Posterior cingulate gyrus (tissue), 11 donors: ENCODE measurements at regions of chr6 and their contacts with region 1.

Region 1: GRCh38 chr6:155530219-155530834 is 74.7 kb upstream of the NOX3 start:
- DNase-seq: no peak

Region 2: GRCh38 chr6:154986787-154987235 is 543.5 kb before region 1 on chr6:
- intact Hi-C with region 1: no loop called
- DNase-seq: no peak

Region 3: DNA sequence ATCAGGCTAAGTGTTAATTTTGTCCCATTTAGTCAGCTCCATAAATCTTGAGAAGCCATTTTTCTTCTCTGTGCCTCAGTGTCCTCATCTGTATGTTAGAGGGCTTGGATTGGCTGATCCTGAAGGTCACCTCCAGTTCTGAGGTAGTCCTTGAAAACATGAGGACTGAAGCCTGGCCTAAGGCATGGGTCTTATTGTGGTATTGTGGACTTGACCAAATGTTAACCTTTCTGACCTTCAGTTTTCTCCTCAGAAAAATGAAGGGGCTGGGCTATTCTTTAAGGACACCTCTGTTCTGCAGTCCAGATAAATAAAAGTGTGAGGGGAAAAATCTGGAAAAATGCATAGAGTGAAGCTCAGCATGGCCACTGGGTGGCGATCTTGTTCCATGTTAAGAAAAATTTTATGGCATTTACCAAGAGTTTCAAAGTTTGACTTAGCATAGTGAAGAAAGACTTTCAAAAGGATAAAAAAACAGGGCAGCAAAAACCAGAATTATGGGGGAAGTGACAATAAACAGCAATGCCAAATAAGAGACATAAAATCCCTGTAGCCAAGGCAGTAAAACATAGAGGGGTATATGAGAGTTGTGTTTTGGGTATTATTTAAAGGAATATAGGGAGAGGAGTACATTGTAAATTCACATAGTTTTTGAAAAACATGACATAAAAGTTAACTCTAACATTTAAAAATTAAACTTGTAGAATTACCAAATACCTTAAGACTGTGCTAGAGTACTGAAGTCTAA is 202.8 kb before region 1 on chr6:
- intact Hi-C with region 1: loop called (anchors 2 kb)
- DNase-seq: peak in 7 of 10 donors; percentile 34 to 86 (median 50)

Region 4: DNA sequence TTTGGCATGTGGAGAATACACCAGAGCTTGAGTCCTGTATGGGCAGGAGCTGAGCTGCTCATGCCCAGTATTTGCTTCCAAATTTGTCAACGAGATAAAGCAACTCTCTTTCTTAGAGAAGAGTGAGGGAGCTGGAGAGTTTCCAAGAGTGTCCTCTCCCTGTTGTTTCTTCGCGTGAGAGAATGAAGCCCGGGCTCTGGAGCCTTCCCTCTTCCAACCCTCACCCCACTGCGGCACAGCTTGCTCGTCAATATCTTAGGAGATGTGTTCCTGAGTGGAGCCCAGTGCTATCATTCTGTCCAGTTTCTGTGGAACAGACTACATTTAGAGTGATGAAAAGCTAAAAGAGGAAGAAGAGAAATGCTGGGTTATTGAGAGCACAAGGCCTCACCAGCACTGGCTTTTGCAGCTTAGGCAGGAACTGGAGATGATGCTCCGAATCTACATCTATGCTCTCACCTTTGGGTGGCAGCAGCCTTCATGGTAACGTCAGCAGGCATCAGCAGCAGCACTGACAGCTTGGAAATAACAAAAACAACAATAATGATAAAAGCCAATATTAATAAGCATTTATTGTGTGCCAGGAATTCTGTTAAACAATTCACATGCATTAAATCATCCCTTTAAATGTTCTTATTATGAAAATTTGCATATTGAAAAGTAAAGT is 149.5 kb before region 1 on chr6:
- intact Hi-C with region 1: loop called (anchors 10 kb)
- DNase-seq: peak in 3 of 10 donors; percentile 8 to 55 (median 10)

Region 5: DNA sequence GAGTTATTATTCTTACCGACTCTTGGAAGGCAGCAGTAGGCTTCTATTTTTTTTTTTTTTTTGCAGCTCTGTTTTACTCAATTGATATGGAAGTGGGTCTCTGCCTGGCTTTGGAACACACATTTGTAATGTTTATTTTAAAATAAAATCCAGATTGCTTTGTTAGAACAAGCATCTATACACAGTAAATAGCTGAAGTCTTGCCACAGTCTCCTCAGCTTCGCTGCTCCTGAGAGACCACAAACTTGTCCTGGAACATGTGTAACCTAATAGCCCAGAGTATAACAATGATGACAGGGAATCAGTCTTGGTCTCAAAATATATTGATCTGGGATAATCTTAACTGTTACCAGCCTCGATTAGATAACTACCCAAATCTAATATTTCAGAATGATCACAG is 225.1 kb after region 1 on chr6:
- intact Hi-C with region 1: no loop called
- DNase-seq: no peak